Activated T-helper 2 cell treated with anti-CD3 and anti-CD28 coated beads, Interferon-gamma antibody, Interleukin-2, Interleukin-4, amounts not matched to agents 10 μg/mL and 5 μg/mL and 100 μg/mL, durations not matched to agents 14 hours and 24 hours and 36 hours (primary cell): ENCODE measurements at regions of chr3 and their contacts with region 1.

Region 1: GRCh38 chr3:196609343-196609775 is 30.1 kb upstream of the NRROS start:
- DNase-seq: peak; percentile 86
- H3K4me3 Mint-ChIP-seq: peak overlapping the region; percentile 62
- H3K27ac Mint-ChIP-seq: peak overlapping the region; percentile 92
- H3K4me1 Mint-ChIP-seq: peaks cover 34% of the 10 kb centered on the region
- H3K27me3 Mint-ChIP-seq: no peaks in the 10 kb centered on the region

Region 2: GRCh38 chr3:196537319-196537984 is 71.9 kb before region 1 on chr3:
- intact Hi-C with region 1: loop called (anchors 5 kb)
- DNase-seq: peak; percentile 40
- H3K4me3 Mint-ChIP-seq: no peak overlapping the region
- H3K27ac Mint-ChIP-seq: no peak overlapping the region
- H3K4me1 Mint-ChIP-seq: peaks cover 9% of the 10 kb centered on the region
- H3K27me3 Mint-ChIP-seq: no peaks in the 10 kb centered on the region

Region 3: GRCh38 chr3:196568246-196569002 is 40.9 kb before region 1 on chr3 and contains the starts of genes FBXO45 and WDR53:
- intact Hi-C with region 1: loop called (anchors 5 kb)
- DNase-seq: peak; percentile 95
- H3K4me3 Mint-ChIP-seq: peak within 1 kb of the TSS; percentile 94
- H3K27ac Mint-ChIP-seq: peak within 1 kb of the TSS; percentile 89
- H3K4me1 Mint-ChIP-seq: peaks cover 37% of the 10 kb centered on the region
- H3K27me3 Mint-ChIP-seq: no peaks in the 10 kb centered on the region
- total RNA-seq, gene FBXO45: 22.4 and 23.0 TPM in 2 replicates
- total RNA-seq, gene WDR53: 16.5 and 17.4 TPM in 2 replicates

Region 4: GRCh38 chr3:196632046-196632751 is 22.8 kb after region 1 on chr3:
- intact Hi-C with region 1: loop called (anchors 1 kb)
- DNase-seq: peak; percentile 97
- H3K4me3 Mint-ChIP-seq: peak overlapping the region; percentile 87
- H3K27ac Mint-ChIP-seq: peak overlapping the region; percentile 97
- H3K4me1 Mint-ChIP-seq: peaks cover 54% of the 10 kb centered on the region
- H3K27me3 Mint-ChIP-seq: no peaks in the 10 kb centered on the region

Region 5: DNA sequence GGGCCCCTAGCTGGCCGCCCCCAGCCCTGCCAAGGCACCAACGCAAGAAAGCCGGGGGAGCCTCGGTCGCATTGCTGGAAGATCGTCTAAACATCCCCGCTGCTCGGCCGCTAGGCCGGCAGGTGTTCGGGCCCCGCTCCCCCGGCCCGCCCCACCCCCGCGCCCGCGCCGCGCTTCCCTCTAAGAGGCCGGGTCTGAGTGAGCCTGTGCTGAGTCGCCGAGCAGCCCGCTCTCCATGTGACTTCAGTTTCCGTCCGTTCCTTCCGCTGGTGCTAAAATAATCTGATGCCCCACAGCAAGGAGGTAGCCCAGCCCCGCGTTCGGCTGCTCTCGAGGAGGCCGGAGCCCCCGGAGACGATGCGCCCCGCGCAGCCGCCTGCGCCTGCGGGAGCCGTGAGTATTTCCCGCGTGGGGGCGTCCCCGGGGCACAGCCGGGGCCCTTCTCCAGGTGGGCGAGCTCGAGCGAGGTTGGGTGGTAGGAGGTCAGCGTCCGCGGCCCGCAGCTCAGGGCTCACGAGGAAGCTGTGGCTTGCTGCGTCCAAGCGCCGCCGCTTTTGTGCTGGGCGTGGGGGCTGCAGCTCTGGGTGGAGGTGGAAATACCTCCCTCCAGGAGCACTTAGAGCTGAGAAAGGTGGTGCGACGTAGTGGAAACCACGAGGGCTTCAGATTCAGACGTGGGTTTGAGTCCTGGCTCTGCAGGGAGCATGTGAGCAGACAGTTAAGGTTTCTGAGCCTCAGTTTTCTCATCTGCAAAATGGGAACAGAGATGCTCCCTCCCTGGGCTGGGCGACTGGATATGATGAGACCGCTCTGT is 30.3 kb after region 1 on chr3 and contains the start of gene NRROS:
- intact Hi-C with region 1: loop called (anchors 1 kb)
- DNase-seq: peak; percentile 71
- H3K4me3 Mint-ChIP-seq: peak within 1 kb of the TSS; percentile 96
- H3K27ac Mint-ChIP-seq: peak within 1 kb of the TSS; percentile 99
- H3K4me1 Mint-ChIP-seq: peaks cover 57% of the 10 kb centered on the region
- H3K27me3 Mint-ChIP-seq: no peaks in the 10 kb centered on the region
- total RNA-seq, gene NRROS: 51.4 and 53.2 TPM in 2 replicates

Region 6: GRCh38 chr3:196684548-196685407 is 75.4 kb after region 1 on chr3:
- intact Hi-C with region 1: loop called (anchors 1 kb)
- DNase-seq: peak; percentile 61
- H3K4me3 Mint-ChIP-seq: peak overlapping the region; percentile 40
- H3K27ac Mint-ChIP-seq: peak overlapping the region; percentile 47
- H3K4me1 Mint-ChIP-seq: peaks cover 30% of the 10 kb centered on the region
- H3K27me3 Mint-ChIP-seq: no peaks in the 10 kb centered on the region

Region 7: GRCh38 chr3:197554562-197555280 is 945.4 kb after region 1 on chr3:
- intact Hi-C with region 1: no loop called
- DNase-seq: peak; percentile 93
- H3K4me3 Mint-ChIP-seq: peak overlapping the region; percentile 92
- H3K27ac Mint-ChIP-seq: peak overlapping the region; percentile 96
- H3K4me1 Mint-ChIP-seq: peaks cover 32% of the 10 kb centered on the region
- H3K27me3 Mint-ChIP-seq: peaks cover 13% of the 10 kb centered on the region